Pancreas (tissue), 10 donors: ENCODE measurements at regions of chr11 and their contacts with region 1.

Region 1: DNA sequence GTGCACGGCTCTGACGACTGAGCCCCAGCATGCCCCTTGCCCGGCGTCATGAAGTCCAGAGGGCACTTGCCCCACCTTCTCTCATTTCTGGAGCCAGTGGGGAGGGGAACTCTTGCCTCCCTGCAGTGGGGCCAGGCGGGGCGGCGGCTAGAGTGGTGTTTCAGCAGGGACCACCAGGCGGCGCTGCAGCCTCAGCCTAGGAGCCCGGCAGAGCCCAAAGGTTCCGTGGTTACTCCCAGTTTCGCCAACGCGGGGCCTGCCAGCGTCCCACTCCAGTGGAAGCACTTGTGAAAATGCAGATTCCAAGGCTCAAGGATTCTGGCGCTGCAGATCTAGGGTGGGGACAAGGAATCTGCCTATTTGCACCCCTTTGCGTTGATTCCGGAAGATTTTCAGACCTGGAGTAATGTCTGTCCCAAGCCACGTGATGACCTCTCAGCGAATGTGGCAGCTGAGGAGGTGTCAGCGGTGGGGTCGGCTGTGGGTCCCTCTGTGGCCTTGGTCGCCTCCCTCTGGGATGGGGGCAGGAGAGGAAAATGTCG is 55.7 kb downstream of the CD82 start:
- DNase-seq: peak in 5 of 6 donors; percentile 35 to 87 (median 58)
- ATAC-seq: peak; percentile 49 to 85 (median 75)
- H3K4me3 ChIP-seq: no peak overlapping the region
- H3K27ac ChIP-seq: no peak overlapping the region
- H3K4me1 ChIP-seq: no peaks in the 10 kb centered on the region
- H3K27me3 ChIP-seq: no peaks in the 10 kb centered on the region
- CTCF ChIP-seq: peak; percentile 72 to 83 (median 78)

Region 2: GRCh38 chr11:44190868-44191200 is 430.4 kb before region 1 on chr11:
- intact Hi-C with region 1: no loop called
- DNase-seq: no peak
- ATAC-seq: no peak
- H3K4me3 ChIP-seq: no peak overlapping the region
- H3K27ac ChIP-seq: no peak overlapping the region
- H3K4me1 ChIP-seq: no peaks in the 10 kb centered on the region
- H3K27me3 ChIP-seq: no peaks in the 10 kb centered on the region
- CTCF ChIP-seq: no peak

Region 3: DNA sequence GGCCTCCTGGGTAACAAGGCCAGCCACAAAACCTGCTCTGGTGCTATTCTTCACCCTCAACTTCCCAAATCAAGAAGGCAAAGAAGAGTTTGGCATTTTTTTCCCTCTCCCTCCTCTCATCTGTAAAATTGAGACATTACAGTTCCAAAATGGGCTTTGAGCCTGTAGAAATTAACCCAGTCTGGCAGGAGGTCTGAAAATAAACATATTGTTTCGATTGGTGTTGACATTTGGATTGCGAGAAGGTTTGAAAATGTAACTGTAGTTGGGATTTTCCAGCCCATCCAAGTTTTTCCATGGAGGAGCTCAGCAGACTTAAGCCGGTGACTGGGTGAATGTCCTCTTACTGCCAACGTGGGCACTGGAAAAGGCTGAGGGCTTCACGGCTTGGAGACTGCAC is 276.3 kb before region 1 on chr11:
- intact Hi-C with region 1: no loop called
- DNase-seq: no peak
- ATAC-seq: no peak
- H3K4me3 ChIP-seq: no peak overlapping the region
- H3K27ac ChIP-seq: no peak overlapping the region
- H3K4me1 ChIP-seq: no peaks in the 10 kb centered on the region
- H3K27me3 ChIP-seq: no peaks in the 10 kb centered on the region
- CTCF ChIP-seq: no peak

Region 4: DNA sequence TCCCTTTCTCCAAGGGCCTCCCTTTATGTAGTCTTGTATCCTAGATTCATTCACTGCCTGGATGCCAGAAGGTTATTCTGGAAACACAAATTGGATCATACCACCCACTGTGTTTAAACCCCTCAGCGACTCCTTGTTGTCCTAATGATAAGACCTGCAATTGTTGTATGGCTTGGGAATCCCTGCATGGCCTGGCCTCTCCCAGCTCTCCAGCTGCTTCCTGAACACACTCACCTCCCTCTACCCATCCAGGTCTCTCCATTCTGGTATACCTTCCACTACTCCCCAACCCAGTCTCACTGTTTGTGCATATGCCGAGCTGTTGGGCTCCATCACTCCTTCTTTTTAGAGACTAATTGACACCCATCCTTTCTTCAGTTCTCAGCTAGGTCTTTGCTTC is 187.0 kb before region 1 on chr11:
- intact Hi-C with region 1: no loop called
- DNase-seq: no peak
- ATAC-seq: no peak
- H3K4me3 ChIP-seq: no peak overlapping the region
- H3K27ac ChIP-seq: no peak overlapping the region
- H3K4me1 ChIP-seq: no peaks in the 10 kb centered on the region
- H3K27me3 ChIP-seq: no peaks in the 10 kb centered on the region
- CTCF ChIP-seq: no peak

Region 5: DNA sequence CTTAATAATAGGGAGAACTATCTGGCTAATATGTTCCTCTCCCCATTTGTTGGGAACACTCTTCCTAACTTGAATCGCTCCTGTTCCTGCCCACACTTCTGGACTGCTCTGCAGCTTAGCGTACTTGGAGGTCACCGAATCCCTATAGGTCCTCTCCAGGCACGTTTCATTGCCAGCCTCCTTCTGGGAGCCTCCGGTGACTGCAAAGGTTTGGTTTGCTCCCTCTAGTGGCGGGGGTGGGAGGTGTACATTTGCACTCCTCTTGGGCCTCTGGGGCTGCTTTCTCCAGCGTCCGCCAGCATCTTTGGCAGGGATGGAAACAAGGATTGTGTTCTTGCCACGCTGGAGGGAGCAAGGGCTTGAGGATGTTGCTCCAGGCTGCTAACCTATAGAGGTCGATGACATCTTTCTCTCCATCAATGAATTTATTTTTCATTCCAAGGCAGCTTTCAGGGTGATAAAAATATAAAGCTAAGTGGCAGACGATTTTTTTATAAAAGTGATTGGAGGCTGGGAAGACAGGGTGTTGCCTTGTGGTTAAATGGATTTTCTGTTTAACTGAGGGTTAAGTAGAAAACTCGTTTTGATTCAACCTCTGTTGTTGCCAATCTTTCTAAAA is 154.3 kb after region 1 on chr11:
- intact Hi-C with region 1: no loop called
- DNase-seq: peak in 5 of 6 donors; percentile 38 to 75 (median 56)
- ATAC-seq: peak; percentile 58 to 86 (median 76)
- H3K4me3 ChIP-seq: no peak overlapping the region
- H3K27ac ChIP-seq: no peak overlapping the region
- H3K4me1 ChIP-seq: no peaks in the 10 kb centered on the region
- H3K27me3 ChIP-seq: no peaks in the 10 kb centered on the region
- CTCF ChIP-seq: peak; percentile 49 to 58 (median 54)

Region 6: GRCh38 chr11:44911029-44911814 is 290.0 kb after region 1 on chr11:
- intact Hi-C with region 1: loop called in 2 of 3 experiments (anchors 5 to 10 kb)
- DNase-seq: peak in 5 of 6 donors; percentile 70 to 88 (median 78)
- ATAC-seq: peak; percentile 86 to 95 (median 92)
- H3K4me3 ChIP-seq: no peak overlapping the region
- H3K27ac ChIP-seq: no peak overlapping the region
- H3K4me1 ChIP-seq: no peaks in the 10 kb centered on the region
- H3K27me3 ChIP-seq: no peaks in the 10 kb centered on the region
- CTCF ChIP-seq: peak; percentile 74 to 91 (median 88)